ENCODE measurements at regions of chr7 and their contacts with region 1.

Region 1: DNA sequence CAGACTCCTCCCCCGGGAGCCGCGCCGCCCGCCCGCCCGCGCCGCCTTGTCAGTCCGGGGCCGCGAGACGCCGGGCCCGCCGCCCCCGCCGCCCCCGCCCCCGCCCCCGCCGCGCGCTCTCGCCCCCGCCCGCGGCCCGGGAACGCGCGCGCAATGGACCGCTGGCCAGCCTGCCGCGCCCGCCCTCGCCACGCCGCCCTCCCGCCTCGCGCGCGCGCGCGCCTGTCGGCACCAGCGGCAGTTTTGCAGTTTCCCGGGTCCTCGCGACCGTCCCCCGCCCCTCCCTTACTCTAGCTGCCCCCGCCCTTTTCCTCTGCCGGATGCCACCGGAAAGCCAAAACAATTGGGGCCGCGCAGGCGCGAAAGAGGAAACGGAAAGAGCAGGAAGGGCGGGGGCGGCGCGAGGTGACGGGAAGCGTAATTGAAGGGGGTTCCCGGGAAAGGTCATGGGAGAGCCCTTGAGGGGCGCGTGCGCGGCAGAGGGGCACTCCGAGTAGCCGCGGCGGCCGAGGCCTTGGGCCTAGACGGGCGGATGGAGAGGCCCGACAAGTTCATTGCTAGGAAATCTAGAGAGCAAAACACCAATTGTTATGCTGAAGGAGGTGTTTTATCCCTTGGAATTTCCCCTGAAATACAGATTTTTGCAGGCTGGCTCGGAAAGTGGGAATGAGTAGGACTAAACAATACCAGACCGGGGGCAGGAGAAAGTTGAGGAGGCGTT is 400 bp upstream of the KBTBD2 start:
- DNase-seq: peak; percentile 91 to 99 (median 96)

Region 2: DNA sequence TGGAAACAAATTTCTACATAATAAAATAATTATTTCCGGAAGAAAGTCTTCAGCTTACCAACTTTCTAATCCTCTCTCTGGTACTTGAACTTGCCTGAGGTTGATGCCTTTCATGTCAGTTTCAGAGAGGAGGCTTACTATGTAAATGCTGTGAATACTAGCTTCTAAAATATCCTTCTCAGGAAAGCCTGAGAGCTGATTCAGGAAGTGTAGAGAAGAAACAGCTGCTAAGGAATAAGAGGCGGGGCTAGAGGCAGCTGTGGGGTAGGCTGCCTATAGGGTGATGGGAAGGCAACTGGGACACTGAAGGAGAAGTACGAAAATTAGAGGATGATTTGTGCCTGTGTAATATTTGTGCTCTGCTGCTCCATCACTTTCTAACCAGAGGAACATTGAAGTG is 327.4 kb before region 1 on chr7:
- intact Hi-C with region 1: no loop called
- DNase-seq: no peak

Region 3: DNA sequence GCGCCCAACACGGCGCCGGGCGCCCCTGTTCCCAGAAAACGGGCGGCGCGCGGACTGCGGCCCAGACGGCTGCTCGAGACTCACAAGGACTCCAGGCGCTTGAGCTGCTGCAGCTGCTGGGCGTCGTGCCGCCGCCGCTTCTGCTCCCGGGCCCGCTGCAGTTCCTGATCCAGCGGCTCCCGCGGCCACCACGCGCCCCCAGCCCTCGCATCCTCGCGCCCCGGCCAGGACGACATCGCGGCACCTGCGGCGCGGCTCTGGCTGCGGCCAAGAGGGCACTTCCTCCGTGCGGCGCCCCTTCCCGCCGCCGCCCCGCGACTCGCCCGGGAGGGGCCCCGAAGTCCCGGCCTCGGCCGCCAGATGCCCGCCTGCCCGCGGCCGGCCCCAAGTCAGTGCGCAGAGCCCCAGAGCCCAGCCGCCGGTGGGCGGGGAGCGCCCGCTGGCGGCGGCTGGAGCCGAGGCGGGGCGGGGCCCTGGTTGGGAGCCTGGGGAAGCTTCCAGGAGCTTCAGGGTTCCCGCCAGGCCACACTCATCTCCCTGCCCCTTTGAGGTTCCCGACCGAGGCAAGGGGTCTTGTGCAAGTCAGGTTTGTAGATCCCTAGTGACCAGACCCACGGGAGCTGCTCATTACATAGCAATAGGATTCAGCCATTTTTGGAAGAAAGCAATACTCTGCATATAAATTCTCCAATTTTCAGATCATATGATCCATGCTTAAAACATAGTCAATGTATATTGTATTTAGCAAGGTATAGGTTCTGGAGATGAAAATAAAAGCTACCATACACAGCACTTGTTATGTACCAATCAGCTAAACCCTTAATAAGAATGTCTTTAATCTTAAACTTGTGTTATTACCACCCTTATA is 51.1 kb after region 1 on chr7:
- intact Hi-C with region 1: loop called (anchors 5 kb)
- DNase-seq: peak; percentile 39 to 91 (median 84)